ENCODE measurements at regions of chr19 and their contacts with region 1.

Region 1: DNA sequence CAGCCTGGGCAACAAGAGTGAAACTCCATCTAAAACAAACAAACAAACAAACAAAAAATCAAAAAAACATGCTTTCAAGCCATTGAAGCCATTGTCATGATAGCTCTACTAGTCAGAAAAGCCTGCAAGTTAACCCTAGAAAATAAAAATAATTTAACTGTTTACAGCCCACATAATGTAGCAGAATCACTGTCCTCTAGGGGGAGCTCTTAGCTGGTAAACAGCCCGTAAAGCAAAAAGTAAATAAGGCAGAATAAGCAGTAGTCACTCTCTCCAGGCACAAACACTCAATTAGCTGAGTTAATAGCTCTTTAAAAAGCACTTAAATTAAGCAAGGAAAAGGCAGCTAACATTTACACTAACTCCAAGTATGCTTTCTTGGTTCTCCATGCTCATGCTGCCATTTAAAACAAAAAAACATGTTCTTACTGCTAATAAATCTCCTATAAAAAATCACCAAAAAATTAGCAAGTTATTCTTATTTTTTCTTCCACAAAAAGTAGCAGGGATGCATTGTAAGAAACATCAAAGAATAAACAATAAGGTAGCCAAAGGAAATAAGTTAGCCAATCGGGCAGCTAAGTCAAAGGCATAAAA is 11.3 kb downstream of the LILRB4 start:
- DNase-seq: peak; percentile 22
- ATAC-seq: no peak
- H3K4me3 ChIP-seq: no peak overlapping the region
- H3K27ac ChIP-seq: no peak overlapping the region
- H3K4me1 ChIP-seq: no peaks in the 10 kb centered on the region
- H3K27me3 ChIP-seq: no peaks in the 10 kb centered on the region
- CTCF ChIP-seq: peak; percentile 47
- EP300 ChIP-seq: no peak
- POLR2A ChIP-seq: no peak
- RAD21 ChIP-seq: no peak

Region 2: DNA sequence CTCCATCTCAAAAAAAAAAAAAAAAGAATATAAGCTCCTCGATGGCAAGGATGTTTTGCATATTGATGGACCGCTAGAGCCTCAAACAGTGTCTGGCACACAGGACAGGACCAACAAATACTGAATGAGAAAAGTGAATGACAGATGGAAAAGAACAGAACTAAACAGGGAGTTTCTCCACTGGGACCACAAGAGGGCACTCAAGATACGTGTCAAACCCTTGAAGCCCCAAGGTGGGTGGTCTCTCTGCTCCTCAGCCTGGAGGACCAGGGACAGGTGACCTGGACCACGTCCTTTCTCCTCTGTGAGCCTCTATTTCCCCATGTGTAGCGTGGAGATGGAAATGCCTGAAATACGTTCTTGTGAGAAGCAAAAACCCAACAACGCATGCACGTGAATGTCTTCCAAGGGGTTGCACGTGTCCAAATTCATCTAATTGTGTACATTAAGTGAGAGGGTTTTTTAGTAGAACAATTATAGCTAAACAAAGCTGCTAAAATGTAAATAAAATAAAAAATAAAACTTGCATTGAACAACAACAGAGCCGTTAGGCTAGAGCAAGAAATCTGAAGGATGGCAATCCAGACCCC is 195.3 kb before region 1 on chr19:
- CTCF ChIA-PET with region 1: interaction called, 4 read pairs
- POLR2A ChIA-PET with region 1: no interaction called
- in situ Hi-C with region 1: loop called (anchors 10 kb)
- intact Hi-C with region 1: loop called (anchors 2 kb)
- DNase-seq: peak; percentile 59
- ATAC-seq: peak; percentile 56; the same call in 2 of the 3 replicates
- H3K4me3 ChIP-seq: no peak overlapping the region
- H3K27ac ChIP-seq: no peak overlapping the region
- H3K4me1 ChIP-seq: peaks cover 28% of the 10 kb centered on the region
- H3K27me3 ChIP-seq: no peaks in the 10 kb centered on the region
- CTCF ChIP-seq: peak; percentile 79
- EP300 ChIP-seq: no peak
- POLR2A ChIP-seq: no peak
- RAD21 ChIP-seq: 0 out of 2 replicates have a peak, but pooled peaks have one; percentile 19

Region 3: DNA sequence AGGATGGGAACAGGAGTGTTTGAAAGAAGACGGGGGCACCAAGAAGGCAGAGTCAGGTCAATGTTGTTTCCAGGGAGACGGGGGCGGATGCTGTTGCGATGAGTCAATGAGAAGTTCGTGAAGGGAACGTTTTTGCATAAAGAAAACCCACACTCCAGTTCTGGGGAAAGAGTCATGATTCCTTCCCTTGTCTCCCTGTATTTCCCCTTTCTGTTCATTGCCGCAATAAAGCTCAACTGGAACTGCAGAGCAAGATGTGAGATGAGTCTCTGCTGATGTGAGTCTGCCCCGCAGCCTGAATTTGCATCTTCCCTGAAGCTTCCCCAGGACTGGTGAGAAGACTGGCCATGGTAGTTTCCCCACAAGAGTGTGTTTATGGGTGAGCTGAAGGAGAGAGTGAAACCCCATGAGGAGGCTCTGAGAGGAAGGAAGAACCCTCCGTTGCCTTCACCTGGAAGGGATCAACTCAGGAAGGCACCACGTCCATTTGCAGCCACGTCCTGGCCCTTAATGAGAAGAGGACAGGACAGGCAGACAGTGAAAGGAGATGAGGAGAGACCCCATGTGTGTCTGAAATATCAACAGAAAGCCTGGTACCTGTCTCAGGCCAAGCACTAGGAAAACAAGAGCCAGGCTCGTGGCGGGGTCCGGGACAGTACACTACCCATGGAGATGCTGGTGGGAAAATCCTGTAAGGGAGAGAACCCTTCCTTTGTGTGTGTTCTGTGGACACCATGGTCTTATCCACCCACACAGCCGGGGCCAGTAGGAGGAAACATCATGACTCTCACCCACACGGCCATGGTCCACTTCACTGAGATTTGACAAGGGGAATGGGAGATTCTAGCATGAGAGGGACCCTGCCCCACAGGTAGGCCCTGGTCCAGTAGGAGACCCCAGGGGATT is 67.0 kb before region 1 on chr19:
- CTCF ChIA-PET with region 1: no interaction called
- POLR2A ChIA-PET with region 1: no interaction called
- in situ Hi-C with region 1: no loop called
- intact Hi-C with region 1: no loop called
- DNase-seq: no peak
- ATAC-seq: no peak
- H3K4me3 ChIP-seq: no peak overlapping the region
- H3K27ac ChIP-seq: no peak overlapping the region
- H3K4me1 ChIP-seq: no peaks in the 10 kb centered on the region
- H3K27me3 ChIP-seq: peaks cover 0 to 12% of the 10 kb centered on the region in 2 experiments; a peak in 2 of 5 replicates
- CTCF ChIP-seq: no peak
- EP300 ChIP-seq: no peak
- POLR2A ChIP-seq: no peak
- RAD21 ChIP-seq: no peak

Region 4: DNA sequence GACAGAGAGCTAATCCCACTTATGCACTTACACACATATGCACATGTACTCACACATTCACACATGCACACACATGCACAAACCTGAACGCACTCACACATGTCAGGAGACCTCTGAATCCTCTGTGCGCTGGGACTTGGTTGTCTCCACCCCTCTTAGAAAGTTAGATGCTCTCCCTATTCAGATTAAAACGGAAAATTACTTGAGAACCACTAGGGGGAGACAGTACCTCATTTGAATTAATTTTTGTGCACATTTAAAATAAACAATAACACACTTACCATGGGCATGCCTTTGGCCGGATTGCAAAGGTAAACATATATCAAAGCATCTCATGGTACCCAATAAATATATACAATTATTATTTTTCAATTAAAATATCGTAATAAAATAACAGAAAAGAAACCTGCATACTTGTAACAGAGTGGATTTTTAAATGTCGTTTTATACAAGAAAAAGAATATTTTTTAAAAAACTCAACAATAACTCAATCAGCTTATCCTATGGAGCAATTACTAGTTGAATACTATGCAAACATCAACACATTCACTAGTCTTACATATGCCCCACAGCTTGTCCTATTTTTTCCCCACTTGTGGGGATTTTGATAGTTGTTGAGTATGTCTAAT is 20.8 kb before region 1 on chr19:
- CTCF ChIA-PET with region 1: interaction called, 10 read pairs
- POLR2A ChIA-PET with region 1: no interaction called
- in situ Hi-C with region 1: no loop called
- intact Hi-C with region 1: no loop called
- DNase-seq: peak; percentile 8
- ATAC-seq: no peak
- H3K4me3 ChIP-seq: no peak overlapping the region
- H3K27ac ChIP-seq: no peak overlapping the region
- H3K4me1 ChIP-seq: no peaks in the 10 kb centered on the region
- H3K27me3 ChIP-seq: no peaks in the 10 kb centered on the region
- CTCF ChIP-seq: peak; percentile 37
- EP300 ChIP-seq: no peak
- POLR2A ChIP-seq: no peak
- RAD21 ChIP-seq: no peak

Measured in HepG2 (cell line).